ENCODE measurements at regions of chr9 and their contacts with region 1.

Region 1: DNA sequence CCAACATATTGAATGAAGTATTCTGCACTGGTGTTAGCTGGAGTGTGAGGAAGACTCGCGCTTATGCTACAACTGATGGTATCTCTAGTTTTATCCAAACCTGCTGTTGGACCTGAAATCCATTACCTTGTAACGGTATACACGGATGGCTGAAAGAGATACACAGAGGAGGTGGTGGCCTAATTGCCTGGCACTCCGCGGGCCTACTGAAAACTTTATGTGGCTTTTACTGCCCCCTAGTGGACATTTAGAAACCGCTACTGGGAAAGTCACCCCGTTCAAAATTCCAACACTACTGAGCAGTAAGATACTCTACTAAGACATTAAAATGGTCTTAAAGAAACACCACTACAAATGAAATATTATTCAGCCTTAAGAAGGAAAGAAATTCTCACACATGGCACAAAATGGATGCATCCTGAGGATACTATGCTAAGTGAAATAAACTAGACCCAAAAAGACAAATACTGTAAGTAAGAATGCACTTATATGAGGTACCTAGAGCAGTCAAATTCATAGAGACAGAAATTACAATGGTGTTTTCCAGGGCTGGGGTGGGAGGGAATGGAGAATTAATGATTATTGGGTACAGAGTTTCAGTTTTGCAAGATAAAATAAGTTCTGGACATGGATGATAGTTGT is 100.4 kb downstream of the TTLL11 start:
- DNase-seq: peak; percentile 95
- H3K4me3 ChIP-seq: peak overlapping the region; percentile 32
- H3K27ac ChIP-seq: peak overlapping the region; percentile 82
- H3K4me1 ChIP-seq: peaks cover 45% of the 10 kb centered on the region
- CTCF ChIP-seq: peak; percentile 99

Region 2: DNA sequence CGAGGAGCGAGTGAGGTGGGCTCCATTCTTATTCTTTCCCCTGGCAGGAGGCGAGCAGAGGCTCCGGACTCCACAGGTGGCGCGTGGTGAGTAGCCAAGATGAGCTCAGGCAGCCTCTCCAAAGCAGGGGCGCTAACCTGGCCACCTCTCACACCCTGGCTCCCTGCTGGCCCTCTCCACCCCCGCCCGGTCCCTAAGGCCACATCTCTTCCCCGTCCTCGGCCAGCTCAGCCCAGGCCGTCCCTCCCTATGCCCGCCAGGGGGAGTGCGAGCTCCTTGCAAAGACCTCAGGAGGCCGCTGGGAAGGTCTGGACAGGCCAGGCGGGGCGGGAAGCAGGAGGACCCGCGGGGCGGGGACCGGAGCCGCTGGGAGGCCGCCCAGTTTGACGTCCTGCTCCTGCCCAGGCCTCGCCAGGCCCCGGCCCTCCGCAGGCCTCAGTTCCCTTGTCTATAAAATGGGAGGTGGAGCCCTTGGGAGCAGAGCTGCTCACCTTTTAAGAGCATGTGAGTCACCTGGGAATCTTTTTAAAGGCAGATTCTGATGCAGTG is 446.7 kb before region 1 on chr9:
- CTCF ChIA-PET with region 1: no interaction called
- POLR2A ChIA-PET with region 1: no interaction called
- intact Hi-C with region 1: loop called (anchors 5 kb)
- DNase-seq: peak; percentile 78
- H3K4me3 ChIP-seq: no peak overlapping the region
- H3K27ac ChIP-seq: no peak overlapping the region
- H3K4me1 ChIP-seq: peaks cover 4% of the 10 kb centered on the region
- CTCF ChIP-seq: peak; percentile 86

Region 3: GRCh38 chr9:121686930-121687541 is 305.7 kb before region 1 on chr9:
- CTCF ChIA-PET with region 1: interaction called, 8 read pairs
- POLR2A ChIA-PET with region 1: interaction called, 4 read pairs
- intact Hi-C with region 1: loop called (anchors 1 kb)
- DNase-seq: peak; percentile 83
- H3K4me3 ChIP-seq: no peak overlapping the region
- H3K27ac ChIP-seq: no peak overlapping the region
- H3K4me1 ChIP-seq: peaks cover 13% of the 10 kb centered on the region
- CTCF ChIP-seq: peak; percentile 97

Region 4: GRCh38 chr9:121744002-121744686 is 248.5 kb before region 1 on chr9:
- CTCF ChIA-PET with region 1: no interaction called
- POLR2A ChIA-PET with region 1: interaction called, 5 read pairs
- intact Hi-C with region 1: loop called (anchors 1 kb)
- DNase-seq: peak; percentile 89
- H3K4me3 ChIP-seq: no peak overlapping the region
- H3K27ac ChIP-seq: no peak overlapping the region
- H3K4me1 ChIP-seq: peaks cover 54% of the 10 kb centered on the region
- CTCF ChIP-seq: peak; percentile 97

Region 5: DNA sequence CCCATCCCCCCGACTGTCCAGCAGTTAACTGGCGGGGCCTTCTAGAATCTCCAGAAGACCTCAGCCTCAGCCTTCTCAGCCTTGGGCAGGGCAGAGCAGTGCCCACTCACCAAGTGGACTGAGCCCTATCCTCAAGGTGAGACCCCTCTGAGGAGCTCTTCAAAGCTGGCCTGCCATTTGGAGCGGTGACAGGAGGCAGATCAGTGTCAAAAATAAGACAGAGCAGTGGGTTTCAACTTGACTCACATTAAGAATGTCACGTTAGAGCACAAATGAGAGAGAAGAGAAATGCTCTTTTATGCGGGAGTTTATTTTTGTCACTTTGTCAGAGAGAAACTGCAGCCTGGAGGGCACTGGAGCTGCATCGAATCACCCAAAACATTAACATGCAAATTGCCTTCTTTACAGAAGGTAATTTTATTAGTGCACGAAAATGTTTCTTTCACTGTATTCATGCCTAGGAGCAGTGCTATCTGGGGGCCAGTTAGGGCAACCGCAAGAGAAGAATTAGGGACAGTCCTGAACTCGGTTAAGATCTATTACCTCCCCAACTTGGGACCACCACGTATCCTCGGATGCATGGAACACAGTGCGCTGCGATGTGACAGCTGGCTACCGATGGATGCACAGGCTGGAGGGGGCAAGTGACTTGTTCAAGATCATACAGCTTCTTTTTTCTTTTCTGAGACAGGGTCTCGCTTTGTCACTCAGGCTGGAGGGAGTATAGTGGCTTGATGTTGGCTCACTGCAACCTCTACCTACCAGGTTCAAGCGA is 152.8 kb before region 1 on chr9:
- CTCF ChIA-PET with region 1: no interaction called
- POLR2A ChIA-PET with region 1: no interaction called
- intact Hi-C with region 1: loop called (anchors 1 kb)
- DNase-seq: no peak
- H3K4me3 ChIP-seq: no peak overlapping the region
- H3K27ac ChIP-seq: no peak overlapping the region
- H3K4me1 ChIP-seq: peaks cover 15% of the 10 kb centered on the region
- CTCF ChIP-seq: no peak

Region 6: DNA sequence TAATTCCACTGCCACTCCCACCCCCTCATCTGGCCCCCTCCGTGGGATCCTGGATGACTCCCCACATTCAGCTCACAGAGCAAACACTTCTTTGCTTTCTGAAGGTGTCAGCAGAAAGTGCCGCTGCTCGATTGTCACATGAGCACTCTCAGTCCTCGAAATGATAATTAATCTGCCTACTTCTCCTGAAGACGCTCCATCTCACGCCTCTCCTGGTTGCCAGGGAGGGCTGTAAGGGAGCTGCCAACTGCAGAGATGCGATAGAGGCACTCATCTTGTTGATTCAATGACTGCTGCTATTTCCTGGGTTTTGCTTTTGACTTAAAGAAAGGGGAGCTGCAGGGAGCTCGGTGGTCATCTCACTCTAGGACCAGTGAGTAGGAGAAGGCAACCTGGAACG is 134.8 kb before region 1 on chr9:
- CTCF ChIA-PET with region 1: no interaction called
- POLR2A ChIA-PET with region 1: no interaction called
- intact Hi-C with region 1: loop called (anchors 5 kb)
- DNase-seq: no peak
- H3K4me3 ChIP-seq: no peak overlapping the region
- H3K27ac ChIP-seq: no peak overlapping the region
- H3K4me1 ChIP-seq: peaks cover 23% of the 10 kb centered on the region
- CTCF ChIP-seq: no peak

Region 7: GRCh38 chr9:122180651-122181050 is 188.0 kb after region 1 on chr9:
- CTCF ChIA-PET with region 1: no interaction called
- POLR2A ChIA-PET with region 1: no interaction called
- intact Hi-C with region 1: no loop called
- DNase-seq: no peak
- H3K4me3 ChIP-seq: no peak overlapping the region
- H3K27ac ChIP-seq: no peak overlapping the region
- H3K4me1 ChIP-seq: no peaks in the 10 kb centered on the region
- CTCF ChIP-seq: no peak